Endothelial cell of umbilical vein (primary cell): ENCODE measurements at regions of chr1 and their contacts with region 1.

Region 1: DNA sequence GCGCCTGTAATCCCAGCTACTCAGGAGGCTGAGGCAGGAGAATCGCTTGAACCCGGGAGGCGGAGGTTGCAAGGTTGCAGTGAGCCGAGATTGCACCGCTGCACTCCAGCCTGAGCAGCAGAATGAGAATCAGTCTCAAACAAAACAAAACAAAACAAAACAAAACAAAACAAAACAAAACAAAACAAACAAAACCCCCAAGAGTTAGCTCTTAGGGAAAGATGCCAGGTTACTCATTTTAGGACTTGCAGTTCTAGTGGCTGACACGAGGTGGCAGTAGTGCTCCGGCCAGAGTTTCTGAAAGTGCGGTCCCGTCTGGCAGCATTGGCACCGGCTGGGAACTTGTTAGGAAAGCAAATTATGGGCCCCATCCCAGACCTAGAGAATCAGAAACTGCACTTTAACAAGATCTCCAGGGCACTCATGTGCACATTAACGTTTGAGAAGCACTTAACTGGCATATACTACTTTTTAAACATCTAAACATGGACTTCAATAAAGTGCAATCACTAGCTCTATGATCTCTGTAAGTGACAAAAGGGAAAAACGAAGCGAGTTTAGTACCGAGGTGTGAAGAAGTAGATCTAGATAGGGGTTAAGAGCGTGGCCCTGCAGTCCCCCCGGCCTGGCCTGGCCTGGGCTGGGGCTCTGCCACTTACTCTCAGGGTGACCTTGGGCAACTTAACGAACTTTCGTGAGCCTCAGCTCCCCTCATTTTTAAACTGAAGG is 41.9 kb upstream of the TNFRSF1B start:
- DNase-seq: peak; percentile 77
- H3K4me3 ChIP-seq: no peak overlapping the region
- H3K27ac ChIP-seq: no peak overlapping the region
- H3K4me1 ChIP-seq: peaks cover 9% of the 10 kb centered on the region
- H3K27me3 ChIP-seq: peaks cover 0 to 3% of the 10 kb centered on the region in 2 experiments
- CTCF ChIP-seq: peak; percentile 77 to 91
- POLR2A ChIP-seq: no peak

Region 2: DNA sequence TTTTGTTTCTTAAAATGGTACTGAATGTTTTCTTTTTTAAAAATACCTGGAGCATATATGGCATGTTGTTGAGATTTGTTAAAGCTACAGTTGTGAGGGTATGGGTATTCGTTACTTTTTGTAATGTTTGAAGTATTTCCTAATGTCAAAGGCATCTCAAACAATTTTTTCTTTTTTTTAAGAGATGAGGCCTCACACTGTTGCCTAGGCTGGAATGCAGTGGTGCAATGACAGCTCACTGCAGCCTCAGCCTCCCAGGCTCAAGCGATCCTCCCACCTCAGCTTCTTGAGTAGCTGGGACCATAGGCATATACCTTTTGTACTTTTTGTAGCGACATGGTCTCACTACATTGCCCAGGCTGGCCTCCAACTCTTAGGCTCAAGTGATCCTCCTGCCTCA is 302.8 kb before region 1 on chr1:
- CTCF ChIA-PET with region 1: no interaction called
- POLR2A ChIA-PET with region 1: no interaction called
- dilution Hi-C with region 1: no loop called
- intact Hi-C with region 1: no loop called
- DNase-seq: no peak
- H3K4me3 ChIP-seq: no peak overlapping the region
- H3K27ac ChIP-seq: peak overlapping the region; percentile 79
- H3K4me1 ChIP-seq: peaks cover 17% of the 10 kb centered on the region
- H3K27me3 ChIP-seq: no peaks in the 10 kb centered on the region
- CTCF ChIP-seq: no peak
- POLR2A ChIP-seq: no peak

Region 3: DNA sequence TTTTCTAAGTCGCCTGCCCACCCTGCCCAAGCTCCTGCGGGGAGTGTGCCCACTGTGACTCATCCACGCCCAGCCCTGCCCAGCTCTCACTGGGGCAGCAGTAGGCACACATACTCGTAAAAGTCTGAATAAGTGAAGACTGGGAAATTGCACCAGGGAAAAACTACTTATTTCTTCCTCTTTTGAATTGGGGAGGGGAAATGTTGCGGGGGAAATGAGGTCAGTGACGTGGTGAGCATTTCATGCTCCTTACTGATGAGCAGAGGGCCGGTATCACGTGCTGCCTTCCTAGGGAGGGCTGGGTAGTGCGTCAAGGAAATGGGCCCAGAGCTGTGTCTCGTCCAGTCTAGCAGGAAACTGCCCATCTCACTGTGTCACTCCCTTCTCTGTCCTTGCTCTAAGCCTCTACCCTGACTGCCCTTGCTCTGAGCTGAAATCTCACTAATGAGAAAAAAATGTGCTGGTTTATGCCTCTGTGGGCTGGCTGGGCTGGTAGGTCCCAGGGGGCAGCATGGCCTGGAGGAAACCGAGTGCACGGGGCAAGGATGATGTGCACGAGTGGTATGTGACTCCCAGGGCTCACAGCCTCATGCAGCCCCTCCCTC is 28.4 kb after region 1 on chr1:
- CTCF ChIA-PET with region 1: interaction called, 20 read pairs
- POLR2A ChIA-PET with region 1: no interaction called
- dilution Hi-C with region 1: no loop called
- intact Hi-C with region 1: no loop called
- DNase-seq: peak; percentile 49
- H3K4me3 ChIP-seq: no peak overlapping the region
- H3K27ac ChIP-seq: peak overlapping the region; percentile 9
- H3K4me1 ChIP-seq: peaks cover 14% of the 10 kb centered on the region
- H3K27me3 ChIP-seq: no peaks in the 10 kb centered on the region
- CTCF ChIP-seq: no peak
- POLR2A ChIP-seq: no peak

Region 4: GRCh38 chr1:12177999-12178441 is 53.2 kb after region 1 on chr1:
- CTCF ChIA-PET with region 1: interaction called, 118 read pairs
- POLR2A ChIA-PET with region 1: no interaction called
- dilution Hi-C with region 1: no loop called
- intact Hi-C with region 1: no loop called
- DNase-seq: peak; percentile 85
- H3K4me3 ChIP-seq: no peak overlapping the region
- H3K27ac ChIP-seq: peak overlapping the region; percentile 95
- H3K4me1 ChIP-seq: peaks cover 43% of the 10 kb centered on the region
- H3K27me3 ChIP-seq: no peaks in the 10 kb centered on the region
- CTCF ChIP-seq: no peak
- POLR2A ChIP-seq: no peak

Region 5: DNA sequence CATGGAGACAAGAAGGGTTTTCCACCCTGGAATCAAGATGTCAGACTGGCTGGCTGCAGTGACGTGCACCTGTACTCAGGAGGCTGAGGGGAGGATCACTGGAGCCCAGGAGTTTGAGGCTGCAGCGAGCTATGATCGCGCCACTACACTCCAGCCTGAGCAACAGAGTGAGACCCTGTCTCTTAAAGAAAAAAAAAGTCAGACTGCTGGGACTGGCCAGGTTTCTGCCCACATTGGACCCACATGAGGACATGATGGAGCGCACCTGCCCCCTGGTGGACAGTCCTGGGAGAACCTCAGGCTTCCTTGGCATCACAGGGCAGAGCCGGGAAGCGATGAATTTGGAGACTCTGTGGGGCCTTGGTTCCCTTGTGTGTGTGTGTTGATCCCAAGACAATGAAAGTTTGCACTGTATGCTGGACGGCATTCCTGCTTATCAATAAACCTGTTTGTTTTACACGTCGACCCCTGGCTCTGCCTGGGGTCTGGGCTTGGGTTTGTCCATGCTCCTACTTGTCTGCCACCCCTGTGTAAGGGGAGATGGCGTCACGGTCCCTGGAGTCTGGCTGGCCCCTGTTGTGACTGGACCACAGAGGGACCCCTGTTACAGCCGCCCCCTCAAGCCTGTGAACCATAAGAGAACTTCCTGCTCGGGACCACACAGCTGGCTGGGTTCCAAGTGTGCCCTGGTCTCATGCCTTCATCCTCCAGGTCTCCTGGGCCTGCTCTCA is 84.1 kb after region 1 on chr1:
- CTCF ChIA-PET with region 1: interaction called, 537 read pairs
- POLR2A ChIA-PET with region 1: no interaction called
- dilution Hi-C with region 1: no loop called
- intact Hi-C with region 1: loop called (anchors 1 kb)
- DNase-seq: peak; percentile 84
- H3K4me3 ChIP-seq: no peak overlapping the region
- H3K27ac ChIP-seq: no peak overlapping the region
- H3K4me1 ChIP-seq: no peaks in the 10 kb centered on the region
- H3K27me3 ChIP-seq: no peaks in the 10 kb centered on the region
- CTCF ChIP-seq: peak; percentile 87 to 92
- POLR2A ChIP-seq: no peak

Region 6: DNA sequence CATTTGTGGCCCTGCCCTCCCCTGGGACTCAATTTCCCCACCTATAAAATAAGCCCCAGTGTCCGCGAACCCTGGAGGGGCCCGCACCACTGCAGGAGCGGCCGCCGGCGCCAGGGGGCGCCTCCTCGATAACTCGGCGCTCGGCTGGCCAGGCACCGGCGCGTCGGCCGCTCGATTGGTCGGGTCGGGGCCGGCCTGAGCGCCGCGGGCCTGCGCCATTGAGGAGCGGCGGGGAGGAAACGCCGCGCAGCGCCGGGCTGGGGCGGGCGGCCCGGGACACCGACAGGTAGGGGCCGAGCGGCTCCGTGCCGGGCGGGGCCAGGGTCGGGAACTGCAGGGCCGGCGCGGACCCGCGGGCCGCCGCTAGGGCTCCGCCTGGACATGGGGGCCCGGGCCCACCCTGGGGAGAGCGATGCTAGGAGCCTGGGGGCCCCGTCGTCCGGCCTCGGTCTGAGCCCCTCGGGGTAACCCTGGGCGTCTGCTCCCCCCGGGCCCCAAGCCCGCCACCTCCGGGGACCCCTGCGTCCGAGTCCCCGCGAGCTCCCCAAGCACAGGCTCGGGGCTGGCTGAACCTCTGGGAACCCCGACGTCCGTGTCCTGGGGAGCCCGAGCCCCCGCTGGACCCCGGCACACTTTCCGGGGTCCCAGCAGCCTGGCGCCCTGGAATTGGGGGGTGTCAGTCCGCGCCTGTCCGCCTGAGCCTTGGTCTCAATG is 105.1 kb after region 1 on chr1 and contains the start of gene VPS13D:
- CTCF ChIA-PET with region 1: interaction called, 24 read pairs
- POLR2A ChIA-PET with region 1: no interaction called
- dilution Hi-C with region 1: no loop called
- intact Hi-C with region 1: no loop called
- DNase-seq: peak; percentile 59
- H3K4me3 ChIP-seq: peak within 1 kb of the TSS; percentile 59 to 75 (median 73)
- H3K27ac ChIP-seq: peak within 1 kb of the TSS; percentile 20
- H3K4me1 ChIP-seq: peaks cover 6% of the 10 kb centered on the region
- H3K27me3 ChIP-seq: no peaks in the 10 kb centered on the region
- CTCF ChIP-seq: peak; percentile 91 to 99
- POLR2A ChIP-seq: peak; percentile 68
- total RNA-seq, gene VPS13D: 41.7 and 48.5 TPM in 2 replicates

Region 7: DNA sequence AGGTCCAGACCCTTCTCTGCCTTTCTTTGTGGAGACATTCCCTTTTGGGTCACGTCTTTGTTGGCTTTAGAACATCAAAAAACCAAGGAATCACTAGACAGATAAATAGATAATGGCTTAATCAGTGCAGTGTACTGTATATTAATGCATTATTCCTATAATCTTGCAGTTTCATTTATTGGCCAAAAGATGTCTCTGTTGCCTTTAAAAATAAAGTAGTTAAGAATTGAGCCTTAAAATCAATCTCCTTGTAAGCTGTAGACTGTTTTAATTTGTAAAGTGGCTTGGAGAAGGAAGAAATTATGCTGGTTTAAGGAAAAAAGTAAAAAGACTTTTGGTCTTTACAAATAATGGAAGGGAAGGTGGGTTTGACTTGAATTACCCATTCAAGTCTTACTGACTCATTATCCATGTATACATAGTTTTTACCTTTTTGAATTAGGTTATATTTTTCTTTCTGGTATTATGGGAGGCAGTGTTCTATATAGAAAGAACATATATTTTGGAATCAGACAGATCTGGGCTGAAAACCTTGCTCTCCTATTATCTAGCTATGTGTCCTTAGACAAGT is 189.6 kb after region 1 on chr1:
- CTCF ChIA-PET with region 1: interaction called, 10 read pairs
- POLR2A ChIA-PET with region 1: no interaction called
- dilution Hi-C with region 1: no loop called
- intact Hi-C with region 1: no loop called
- DNase-seq: peak; percentile 42
- H3K4me3 ChIP-seq: no peak overlapping the region
- H3K27ac ChIP-seq: no peak overlapping the region
- H3K4me1 ChIP-seq: no peaks in the 10 kb centered on the region
- H3K27me3 ChIP-seq: no peaks in the 10 kb centered on the region
- CTCF ChIP-seq: peak; percentile 10 to 19
- POLR2A ChIP-seq: no peak